Dendritic cell treated with granulocyte-macrophage colony-stimulating factor and Interleukin-4, amounts not matched to agents 40 ng/mL and 50 ng/mL, for 4 days (primary cell): ENCODE measurements at regions of chr5 and their contacts with region 1.

Region 1: GRCh38 chr5:142548739-142549275 is 137.1 kb downstream of the FGF1 start:
- H3K4me3 Mint-ChIP-seq: no peak overlapping the region
- H3K27ac Mint-ChIP-seq: no peak overlapping the region
- H3K4me1 Mint-ChIP-seq: peaks cover 5% of the 10 kb centered on the region
- H3K27me3 Mint-ChIP-seq: peaks cover 58% of the 10 kb centered on the region

Region 2: GRCh38 chr5:142151436-142152383 is 397.1 kb before region 1 on chr5:
- intact Hi-C with region 1: loop called (anchors 1 kb)
- H3K4me3 Mint-ChIP-seq: no peak overlapping the region
- H3K27ac Mint-ChIP-seq: no peak overlapping the region
- H3K4me1 Mint-ChIP-seq: peaks cover 10% of the 10 kb centered on the region
- H3K27me3 Mint-ChIP-seq: no peaks in the 10 kb centered on the region

Region 3: GRCh38 chr5:142254431-142254830 is 294.4 kb before region 1 on chr5:
- intact Hi-C with region 1: no loop called
- H3K4me3 Mint-ChIP-seq: no peak overlapping the region
- H3K27ac Mint-ChIP-seq: no peak overlapping the region
- H3K4me1 Mint-ChIP-seq: no peaks in the 10 kb centered on the region
- H3K27me3 Mint-ChIP-seq: peaks cover 23% of the 10 kb centered on the region

Region 4: GRCh38 chr5:142324871-142325724 is 223.7 kb before region 1 on chr5 and contains the start of gene SPRY4:
- intact Hi-C with region 1: loop called (anchors 10 kb)
- H3K4me3 Mint-ChIP-seq: peak within 1 kb of the TSS; percentile 70
- H3K27ac Mint-ChIP-seq: peak within 1 kb of the TSS; percentile 16
- H3K4me1 Mint-ChIP-seq: peaks cover 30% of the 10 kb centered on the region
- H3K27me3 Mint-ChIP-seq: peaks cover 95% of the 10 kb centered on the region